ENCODE measurements at regions of chr15 and their contacts with region 1.

Region 1: GRCh38 chr15:53272116-53272515 is 482.0 kb upstream of the ONECUT1 start:
- DNase-seq: no peak
- ATAC-seq: no peak
- H3K4me3 ChIP-seq: no peak overlapping the region
- H3K4me1 ChIP-seq: no peaks in the 10 kb centered on the region
- CTCF ChIP-seq: no peak

Region 2: GRCh38 chr15:53209389-53210042 is 62.6 kb before region 1 on chr15:
- intact Hi-C with region 1: loop called in 1 of 2 experiments (anchors 10 kb)
- DNase-seq: no peak
- ATAC-seq: no peak
- H3K4me3 ChIP-seq: no peak overlapping the region
- H3K4me1 ChIP-seq: no peaks in the 10 kb centered on the region
- CTCF ChIP-seq: no peak

Region 3: DNA sequence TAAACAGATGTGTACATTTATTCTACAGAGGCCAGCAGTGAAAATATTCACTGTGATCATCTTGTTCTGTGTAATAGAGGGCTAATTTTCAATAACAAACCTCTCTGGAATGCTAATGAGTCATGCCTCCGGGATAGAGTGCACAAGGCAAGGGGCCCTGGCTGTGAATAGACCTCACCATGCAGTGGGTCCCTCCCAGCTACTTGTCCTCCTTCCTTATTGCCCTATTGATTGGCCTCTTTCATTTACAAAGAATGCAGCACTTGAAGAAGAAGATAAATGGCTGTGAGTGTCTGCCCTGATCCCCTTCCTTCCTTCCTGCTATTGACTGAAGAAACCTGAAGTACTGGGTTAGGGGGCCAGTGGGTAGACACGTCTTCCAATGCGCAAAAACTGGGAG is 51.1 kb after region 1 on chr15:
- intact Hi-C with region 1: no loop called
- DNase-seq: no peak
- ATAC-seq: peak; percentile 66
- H3K4me3 ChIP-seq: no peak overlapping the region
- H3K4me1 ChIP-seq: no peaks in the 10 kb centered on the region
- CTCF ChIP-seq: no peak